ENCODE measurements at regions of chr2 and their contacts with region 1.

Region 1: DNA sequence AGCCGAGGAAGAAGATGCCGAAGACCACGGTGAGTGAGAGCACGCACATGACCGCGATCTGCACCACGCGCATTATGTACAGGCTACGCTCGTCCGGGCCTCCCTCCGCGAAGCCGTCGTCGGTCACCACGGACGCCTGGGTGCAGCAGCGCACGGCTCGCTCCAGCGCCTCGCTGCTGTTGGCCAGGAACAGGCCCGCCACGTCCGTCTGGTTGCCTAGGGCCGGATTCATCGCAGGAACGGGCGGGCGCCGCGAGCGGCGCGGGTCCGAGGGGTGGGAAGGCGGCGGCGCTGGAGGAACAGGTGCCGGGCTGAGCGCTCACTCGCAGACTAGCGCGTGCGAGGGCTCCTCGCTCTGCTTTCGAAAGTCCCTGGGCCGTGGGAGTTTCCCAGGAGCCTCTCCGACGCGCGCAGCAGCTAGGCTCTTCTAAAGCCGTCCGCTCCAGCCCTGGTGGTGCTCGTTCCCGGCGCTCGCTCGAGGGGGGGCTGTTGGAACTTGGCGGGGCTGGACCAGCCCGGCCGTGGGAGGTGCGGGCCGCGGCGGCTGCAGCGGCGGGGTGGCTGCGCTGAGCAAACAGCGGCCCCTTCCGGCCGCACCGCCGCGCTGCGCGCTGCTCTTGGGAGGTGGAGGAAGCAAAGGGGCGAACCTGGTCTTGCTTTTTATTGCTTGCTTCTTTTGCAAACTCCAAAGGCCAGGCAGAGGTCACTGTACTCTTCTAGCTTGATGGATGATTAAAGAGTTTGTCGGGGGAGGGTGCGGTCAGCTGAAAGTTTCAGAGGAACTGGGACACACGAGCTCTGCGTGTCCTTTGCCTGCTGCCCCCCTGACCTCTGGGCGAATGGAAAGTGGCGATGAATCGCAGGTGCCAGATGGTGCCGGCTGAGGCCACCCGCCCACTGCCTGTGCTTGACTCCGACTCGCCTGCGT is at the start of gene RPRM:
- DNase-seq: peak; percentile 79
- ATAC-seq: peak; percentile 87 to 93
- total RNA-seq, gene RPRM: 0.44 TPM in 1 of 2 donors, not detected in the other

Region 2: GRCh38 chr2:151753540-151753939 is 1725.1 kb before region 1 on chr2:
- intact Hi-C with region 1: no loop called
- DNase-seq: no peak
- ATAC-seq: peak in 1 of 2 donors; percentile 37

Region 3: DNA sequence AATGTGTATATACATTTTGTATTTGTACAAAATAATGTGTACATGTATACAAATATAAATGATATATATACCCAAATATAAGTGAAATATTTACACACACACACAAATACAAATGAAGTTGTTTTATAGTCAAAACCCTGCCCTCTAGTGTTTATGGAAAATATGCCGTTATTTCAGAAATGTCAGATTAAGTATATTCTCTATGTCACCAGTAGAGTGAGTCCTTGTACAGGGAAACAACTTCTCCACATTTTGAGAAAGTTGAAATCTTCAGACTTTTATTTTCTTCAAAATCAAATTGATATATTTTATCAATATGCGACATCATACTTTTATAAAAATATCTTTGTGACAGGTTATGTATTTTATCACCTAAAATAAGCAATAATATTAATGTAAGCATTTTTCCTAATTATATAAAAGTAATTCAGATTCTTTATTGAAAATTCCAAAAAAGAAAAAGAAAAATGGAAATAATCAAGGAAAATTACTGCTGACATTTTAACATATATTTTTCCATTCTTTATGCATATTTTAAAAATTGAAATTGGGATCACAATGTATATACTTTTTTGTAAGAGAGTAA is 737.8 kb before region 1 on chr2:
- intact Hi-C with region 1: loop called in 1 of 2 experiments (anchors 5 kb)
- DNase-seq: no peak
- ATAC-seq: peak in 1 of 2 donors; percentile 44

Region 4: GRCh38 chr2:152755029-152755428 is 723.6 kb before region 1 on chr2:
- intact Hi-C with region 1: no loop called
- DNase-seq: no peak
- ATAC-seq: no peak

Region 5: GRCh38 chr2:154097833-154098398 is 619.3 kb after region 1 on chr2:
- intact Hi-C with region 1: no loop called
- DNase-seq: no peak
- ATAC-seq: no peak

Measured in left cardiac atrium (tissue), 4 donors.